T-cell (primary cell): ENCODE measurements at regions of chr2 and their contacts with region 1.

Region 1: GRCh38 chr2:225660262-225661131 is 261.0 kb downstream of the NYAP2 start:
- DNase-seq: peak; percentile 15 to 82 (median 59)
- ATAC-seq: peak; percentile 50 to 74 (median 62)
- H3K4me3 ChIP-seq: no peak overlapping the region
- H3K4me3 Mint-ChIP-seq: no peak overlapping the region
- H3K27ac ChIP-seq: no peak overlapping the region
- H3K27ac Mint-ChIP-seq: no peak overlapping the region
- H3K4me1 ChIP-seq: no peaks in the 10 kb centered on the region
- H3K4me1 Mint-ChIP-seq: no peaks in the 10 kb centered on the region
- H3K27me3 ChIP-seq: peaks cover 0 to 2% of the 10 kb centered on the region in 2 experiments
- H3K27me3 Mint-ChIP-seq: peaks cover 22 to 25% of the 10 kb centered on the region in 2 donors

Region 2: GRCh38 chr2:224798180-224798579 is 862.3 kb before region 1 on chr2:
- CTCF ChIA-PET with region 1: no interaction called
- POLR2A ChIA-PET with region 1: interaction called in 1 of 2 experiments, 10 read pairs
- DNase-seq: no peak
- ATAC-seq: no peak
- H3K4me3 ChIP-seq: no peak overlapping the region
- H3K4me3 Mint-ChIP-seq: no peak overlapping the region
- H3K27ac ChIP-seq: no peak overlapping the region
- H3K27ac Mint-ChIP-seq: peak overlapping the region; percentile 64 to 71
- H3K4me1 ChIP-seq: no peaks in the 10 kb centered on the region
- H3K4me1 Mint-ChIP-seq: no peaks in the 10 kb centered on the region
- H3K27me3 ChIP-seq: no peaks in the 10 kb centered on the region
- H3K27me3 Mint-ChIP-seq: no peaks in the 10 kb centered on the region

Region 3: DNA sequence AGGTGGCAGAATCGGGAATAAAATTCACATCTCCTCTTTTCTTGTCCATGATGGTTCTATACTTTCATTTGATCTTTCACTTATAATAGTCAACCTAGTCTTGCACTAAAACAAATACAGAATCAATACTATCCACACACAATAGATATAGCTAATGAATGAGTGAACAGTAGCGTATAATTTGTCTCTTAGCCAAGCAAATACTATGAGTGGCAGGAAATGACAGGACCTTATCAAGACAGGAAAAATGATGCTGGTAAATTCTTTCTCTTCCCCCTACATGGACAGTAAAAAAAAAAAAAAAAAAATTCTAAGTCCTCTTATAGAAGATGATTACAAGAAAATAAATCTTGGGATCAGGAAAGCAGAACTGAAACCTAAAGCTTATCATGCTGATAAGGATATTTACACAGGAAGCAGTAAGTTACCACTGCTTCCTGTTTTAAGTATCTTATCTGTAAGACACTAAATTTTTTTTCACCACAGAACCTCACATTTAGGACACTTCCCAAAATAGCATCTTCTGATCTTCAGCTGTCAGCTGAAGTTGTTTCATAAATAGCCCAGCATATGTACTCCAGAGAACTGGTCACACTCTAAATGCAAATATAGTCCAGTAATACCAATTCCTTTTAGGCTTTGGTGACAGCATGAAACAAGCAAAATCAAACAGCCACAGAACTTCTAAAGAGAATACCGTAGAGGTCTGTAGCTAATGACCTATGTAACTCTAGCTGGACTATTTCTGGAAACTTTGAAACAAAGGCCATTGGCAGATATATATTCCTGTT is 1112.1 kb after region 1 on chr2:
- CTCF ChIA-PET with region 1: interaction called in 1 of 2 experiments, 5 read pairs
- POLR2A ChIA-PET with region 1: interaction called in 1 of 2 experiments, 14 read pairs
- DNase-seq: peak in 1 of 35 experiments; percentile 37
- ATAC-seq: peak; percentile 61 to 85 (median 70)
- H3K4me3 ChIP-seq: peak overlapping the region in 1 of 2 donors; percentile 23
- H3K4me3 Mint-ChIP-seq: peak overlapping the region; percentile 62 to 71 (median 65)
- H3K27ac ChIP-seq: no peak overlapping the region
- H3K27ac Mint-ChIP-seq: peak overlapping the region in 1 of 2 donors; percentile 45
- H3K4me1 ChIP-seq: peaks cover 6 to 19% of the 10 kb centered on the region in 2 experiments
- H3K4me1 Mint-ChIP-seq: peaks cover 25 to 44% (median 38%) of the 10 kb centered on the region in 3 donors
- H3K27me3 ChIP-seq: no peaks in the 10 kb centered on the region
- H3K27me3 Mint-ChIP-seq: no peaks in the 10 kb centered on the region